Esophagus muscularis mucosa (tissue), 4 donors: ENCODE measurements at regions of chr5 and their contacts with region 1.

Region 1: DNA sequence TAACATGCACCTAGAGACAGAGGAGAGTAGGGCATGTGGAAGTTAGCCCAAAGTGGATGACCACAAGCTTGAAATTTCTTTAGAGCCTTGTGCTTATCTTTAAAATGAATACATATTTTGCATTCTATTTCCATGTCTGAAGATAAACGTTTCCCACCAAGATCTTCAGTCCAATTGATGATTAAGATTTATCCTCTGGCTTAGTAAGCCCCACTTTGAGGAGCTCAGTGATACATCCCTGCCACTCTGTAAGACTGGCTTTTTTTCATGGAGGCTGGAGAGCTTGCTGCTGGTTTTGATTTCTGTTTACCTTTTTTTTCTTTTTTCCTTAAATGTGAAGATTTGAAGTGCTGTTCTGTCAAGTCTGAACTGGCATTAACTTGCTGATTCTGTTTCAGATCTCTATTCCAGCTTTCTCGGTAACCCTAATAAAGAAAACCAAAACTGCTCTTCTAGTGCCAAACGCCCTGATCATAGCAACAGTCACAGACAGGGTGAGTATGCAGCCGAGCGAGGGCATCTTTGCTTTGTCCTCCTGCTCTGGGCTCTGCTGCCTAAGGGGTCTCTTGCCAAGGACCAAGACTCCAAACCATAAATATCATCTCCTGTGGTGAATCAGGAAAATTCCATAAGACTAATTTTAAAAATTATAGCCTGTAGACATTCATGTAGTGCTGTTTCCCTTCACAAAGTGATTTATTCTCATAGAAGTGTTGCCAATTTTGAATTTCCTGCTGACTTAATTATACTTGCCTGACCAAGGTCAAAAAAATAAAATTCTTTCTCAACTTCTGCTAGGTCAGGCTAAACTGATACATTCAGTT is 54.3 kb downstream of the GRAMD2B start:
- DNase-seq: no peak
- H3K4me3 ChIP-seq: no peak overlapping the region
- H3K27ac ChIP-seq: peak overlapping the region in 3 of 4 donors; percentile 23 to 57 (median 28)
- H3K4me1 ChIP-seq: peaks cover 0 to 37% (median 20%) of the 10 kb centered on the region in 4 donors
- H3K27me3 ChIP-seq: no peaks in the 10 kb centered on the region
- CTCF ChIP-seq: no peak
- EP300 ChIP-seq: no peak
- POLR2A ChIP-seq: no peak

Region 2: DNA sequence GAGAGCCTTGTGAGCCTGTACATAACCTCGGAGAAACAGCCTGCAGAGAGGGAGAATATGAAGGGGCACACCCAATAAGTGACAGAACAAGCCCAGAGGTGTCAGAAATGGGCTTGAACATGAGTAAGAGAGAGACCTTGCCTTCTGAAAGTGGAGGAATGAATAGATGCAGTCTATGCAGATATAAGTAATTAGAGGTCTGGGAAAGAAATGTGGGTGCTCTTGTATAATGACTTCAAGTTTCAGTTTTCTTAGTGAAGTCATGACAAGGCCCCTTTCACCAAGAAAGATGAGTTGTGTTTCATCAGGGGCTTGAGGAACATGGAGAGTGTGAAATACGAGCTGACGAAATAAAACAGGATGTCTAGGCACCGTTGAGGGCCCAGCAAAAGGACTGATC is 39.2 kb before region 1 on chr5:
- intact Hi-C with region 1: loop called (anchors 5 kb)
- DNase-seq: no peak
- H3K4me3 ChIP-seq: no peak overlapping the region
- H3K27ac ChIP-seq: no peak overlapping the region
- H3K4me1 ChIP-seq: peaks cover 14 to 44% (median 28%) of the 10 kb centered on the region in 4 donors
- H3K27me3 ChIP-seq: no peaks in the 10 kb centered on the region
- CTCF ChIP-seq: no peak
- EP300 ChIP-seq: no peak
- POLR2A ChIP-seq: no peak